ENCODE measurements at regions of chr15 and their contacts with region 1.

Region 1: GRCh38 chr15:78739996-78740903 is 71.0 kb downstream of the ADAMTS7 start:
- H3K4me3 ChIP-seq: no peak overlapping the region
- H3K27ac ChIP-seq: no peak overlapping the region
- H3K4me1 ChIP-seq: no peaks in the 10 kb centered on the region
- CTCF ChIP-seq: no peak

Region 2: GRCh38 chr15:78618490-78618934 is 121.7 kb before region 1 on chr15:
- CTCF ChIA-PET with region 1: interaction called, 12 read pairs
- POLR2A ChIA-PET with region 1: no interaction called
- H3K4me3 ChIP-seq: no peak overlapping the region
- H3K27ac ChIP-seq: no peak overlapping the region
- H3K4me1 ChIP-seq: no peaks in the 10 kb centered on the region
- CTCF ChIP-seq: peak; percentile 1

Region 3: GRCh38 chr15:78727600-78727999 is 12.7 kb before region 1 on chr15:
- CTCF ChIA-PET with region 1: interaction called, 12 read pairs
- POLR2A ChIA-PET with region 1: no interaction called
- H3K4me3 ChIP-seq: no peak overlapping the region
- H3K27ac ChIP-seq: no peak overlapping the region
- H3K4me1 ChIP-seq: no peaks in the 10 kb centered on the region
- CTCF ChIP-seq: no peak

Region 4: DNA sequence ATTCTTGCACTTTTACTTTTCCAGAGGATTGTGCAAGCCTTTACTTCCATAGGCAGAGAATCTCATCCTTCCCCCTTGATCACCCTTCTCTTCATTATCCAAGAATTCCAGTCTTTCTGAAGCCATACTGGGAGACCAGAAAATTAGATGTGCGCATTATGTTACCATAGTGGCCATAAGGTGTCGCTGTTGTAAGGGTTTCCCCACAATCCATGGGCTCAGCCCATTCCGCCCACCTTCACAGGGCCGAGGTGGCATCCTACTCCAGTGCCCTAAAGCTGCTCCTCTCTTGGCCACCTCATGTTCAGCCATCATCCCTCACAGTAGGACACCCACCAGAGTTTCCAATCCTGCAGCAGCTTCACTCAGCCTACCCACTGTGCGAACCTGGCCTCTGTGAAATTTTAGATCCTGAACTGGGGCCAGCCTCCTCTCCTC is 169.6 kb after region 1 on chr15:
- CTCF ChIA-PET with region 1: no interaction called
- POLR2A ChIA-PET with region 1: no interaction called
- H3K4me3 ChIP-seq: no peak overlapping the region
- H3K27ac ChIP-seq: no peak overlapping the region
- H3K4me1 ChIP-seq: no peaks in the 10 kb centered on the region
- CTCF ChIP-seq: peak; percentile 58

Measured in HEK293 (cell line).